ENCODE measurements at regions of chr3 and their contacts with region 1.

Region 1: DNA sequence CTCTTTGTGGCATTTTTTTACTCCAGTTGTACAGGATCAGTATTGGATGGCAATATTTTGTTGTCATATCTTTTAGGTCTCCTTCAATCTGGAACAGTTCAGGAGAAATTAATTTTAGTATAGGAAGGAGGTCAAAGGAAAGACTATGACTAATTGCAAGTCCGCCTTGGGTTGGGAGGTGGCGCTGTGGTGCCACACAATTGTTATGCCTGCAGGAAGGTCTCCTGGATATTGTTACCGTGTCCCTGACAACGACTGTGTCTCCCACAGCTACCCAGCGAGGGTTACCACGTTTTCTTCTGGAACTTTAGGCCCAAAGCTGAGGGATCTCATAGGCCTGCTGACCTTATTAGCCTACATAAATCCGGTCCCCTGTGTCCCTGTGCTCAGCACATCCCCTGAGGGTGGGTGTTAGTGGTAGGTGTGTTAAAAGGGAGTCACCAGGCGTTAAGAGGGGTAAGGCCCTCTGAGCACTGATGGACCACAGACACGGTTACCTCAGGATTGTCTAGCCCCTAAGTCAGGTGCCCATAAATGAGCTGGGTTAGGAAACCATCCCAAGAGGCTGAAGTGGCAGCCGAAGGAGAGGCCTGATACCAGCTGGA is 31.5 kb downstream of the KCNAB1 start:
- DNase-seq: peak in 1 of 2 donors; percentile 87
- H3K4me3 ChIP-seq: no peak overlapping the region
- H3K27ac ChIP-seq: peak overlapping the region; percentile 27 to 45
- H3K4me1 ChIP-seq: peaks cover 11 to 22% of the 10 kb centered on the region in 2 donors
- H3K27me3 ChIP-seq: no peaks in the 10 kb centered on the region
- CTCF ChIP-seq: peak; percentile 70 to 85 (median 74)

Region 2: GRCh38 chr3:155835341-155836071 is 316.4 kb before region 1 on chr3:
- intact Hi-C with region 1: no loop called
- DNase-seq: no peak
- H3K4me3 ChIP-seq: no peak overlapping the region
- H3K27ac ChIP-seq: no peak overlapping the region
- H3K4me1 ChIP-seq: no peaks in the 10 kb centered on the region
- H3K27me3 ChIP-seq: no peaks in the 10 kb centered on the region
- CTCF ChIP-seq: no peak

Region 3: GRCh38 chr3:156044634-156044975 is 107.3 kb before region 1 on chr3:
- intact Hi-C with region 1: loop called (anchors 2 kb)
- DNase-seq: no peak
- H3K4me3 ChIP-seq: no peak overlapping the region
- H3K27ac ChIP-seq: no peak overlapping the region
- H3K4me1 ChIP-seq: peaks cover 0 to 3% of the 10 kb centered on the region in 2 donors
- H3K27me3 ChIP-seq: no peaks in the 10 kb centered on the region
- CTCF ChIP-seq: no peak

Region 4: DNA sequence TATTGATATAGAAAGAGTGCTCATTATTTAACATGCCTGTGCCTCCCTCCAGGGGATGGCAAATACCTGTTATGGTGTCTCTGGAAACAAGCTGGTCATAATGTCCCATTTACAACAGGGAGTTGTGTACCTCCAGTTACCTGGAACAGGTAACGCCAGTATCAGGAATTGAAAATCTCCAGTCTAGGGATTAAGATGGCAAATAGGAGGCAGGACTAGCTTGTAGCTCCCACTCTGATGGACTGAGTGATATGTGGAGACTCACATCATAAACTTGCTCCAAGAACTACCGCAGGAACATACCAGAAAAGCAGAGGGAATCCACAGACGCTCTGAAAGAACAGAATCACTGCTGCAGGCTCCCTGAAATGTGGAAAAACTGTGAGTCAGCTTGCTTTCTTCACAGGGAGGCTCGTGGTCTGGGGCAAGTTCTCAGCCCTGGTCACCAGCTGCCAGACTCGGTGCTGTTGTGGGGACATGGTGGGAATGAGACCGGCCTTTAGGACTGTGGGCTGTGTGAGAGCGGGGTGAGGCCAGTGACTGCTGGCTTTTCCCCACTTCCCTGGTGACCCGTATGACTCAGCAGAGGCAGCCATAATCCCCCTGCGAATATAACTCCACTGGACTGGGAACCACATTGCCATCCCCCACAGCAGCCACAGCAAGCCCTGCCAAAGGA is 65.9 kb after region 1 on chr3:
- intact Hi-C with region 1: no loop called
- DNase-seq: no peak
- H3K4me3 ChIP-seq: no peak overlapping the region
- H3K27ac ChIP-seq: no peak overlapping the region
- H3K4me1 ChIP-seq: no peaks in the 10 kb centered on the region
- H3K27me3 ChIP-seq: no peaks in the 10 kb centered on the region
- CTCF ChIP-seq: no peak

Region 5: GRCh38 chr3:156456771-156457224 is 304.9 kb after region 1 on chr3:
- intact Hi-C with region 1: loop called (anchors 5 kb)
- DNase-seq: peak in 1 of 2 donors; percentile 67
- H3K4me3 ChIP-seq: no peak overlapping the region
- H3K27ac ChIP-seq: peak overlapping the region in 1 of 2 donors; percentile 29
- H3K4me1 ChIP-seq: peaks cover 6 to 21% of the 10 kb centered on the region in 2 donors
- H3K27me3 ChIP-seq: no peaks in the 10 kb centered on the region
- CTCF ChIP-seq: no peak

Region 6: GRCh38 chr3:156816800-156817645 is 665.1 kb after region 1 on chr3:
- intact Hi-C with region 1: loop called (anchors 10 kb)
- DNase-seq: peak; percentile 20 to 90
- H3K4me3 ChIP-seq: peak overlapping the region; percentile 66 to 67
- H3K27ac ChIP-seq: peak overlapping the region; percentile 58 to 74
- H3K4me1 ChIP-seq: no peaks in the 10 kb centered on the region
- H3K27me3 ChIP-seq: no peaks in the 10 kb centered on the region
- CTCF ChIP-seq: peak in 1 of 3 experiments; percentile 16

Region 7: DNA sequence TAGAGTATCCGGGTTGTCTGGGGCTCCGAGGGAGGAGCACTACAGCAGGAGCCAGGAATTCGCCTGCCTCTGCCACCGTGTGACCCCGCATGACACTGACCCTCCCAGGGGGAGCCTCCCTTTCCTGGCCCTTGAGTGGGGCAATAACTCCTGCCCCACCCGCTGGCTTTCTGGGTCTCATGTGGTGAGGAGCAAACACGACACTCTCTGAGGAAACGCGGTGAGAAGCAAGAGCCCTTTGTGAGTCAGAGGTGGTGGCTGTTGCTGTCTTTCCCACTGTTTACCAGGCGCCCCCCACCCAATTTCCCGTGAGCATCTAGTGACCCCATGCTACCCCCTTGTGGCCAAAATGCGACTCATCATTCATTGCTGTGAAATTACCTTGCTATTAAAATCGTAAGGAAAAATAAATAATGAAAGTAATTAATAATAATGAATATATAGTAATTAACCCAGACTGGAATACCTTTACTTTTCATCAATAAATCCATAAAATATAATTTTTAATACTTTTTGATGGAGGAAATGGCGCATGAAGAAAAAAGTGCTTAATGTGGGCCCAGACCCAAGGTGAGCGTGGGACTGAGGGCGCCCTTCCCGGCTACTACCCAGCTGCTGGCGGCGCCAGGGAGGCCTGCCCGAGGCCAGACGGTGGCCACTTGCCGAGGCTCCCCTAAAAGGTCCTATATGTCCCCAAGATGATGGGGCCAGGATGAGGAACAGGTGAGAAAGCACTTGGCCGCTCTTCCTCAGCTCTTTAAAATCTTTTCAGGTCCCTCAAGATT is 978.7 kb after region 1 on chr3:
- intact Hi-C with region 1: loop called (anchors 5 kb)
- DNase-seq: peak in 1 of 2 donors; percentile 76
- H3K4me3 ChIP-seq: no peak overlapping the region
- H3K27ac ChIP-seq: peak overlapping the region in 1 of 2 donors; percentile 60
- H3K4me1 ChIP-seq: peaks cover 5 to 26% of the 10 kb centered on the region in 2 donors
- H3K27me3 ChIP-seq: no peaks in the 10 kb centered on the region
- CTCF ChIP-seq: peak; percentile 14 to 58 (median 23)